H1 (cell line): ENCODE measurements at regions of chr11 and their contacts with region 1.

Region 1: GRCh38 chr11:33065445-33066178 is 26.2 kb downstream of the TCP11L1 start:
- DNase-seq: peak; percentile 73 to 84
- H3K4me3 ChIP-seq: no peak overlapping the region
- H3K27ac ChIP-seq: no peak overlapping the region
- H3K4me1 ChIP-seq: peaks cover 0 to 3% (median 0%) of the 10 kb centered on the region in 4 experiments; a peak in 1 of 7 replicates
- H3K27me3 ChIP-seq: no peaks in the 10 kb centered on the region
- CTCF ChIP-seq: peak; percentile 93 to 99 (median 97)
- EP300 ChIP-seq: no peak
- POLR2A ChIP-seq: no peak
- RAD21 ChIP-seq: peak; percentile 92 to 96

Region 2: GRCh38 chr11:32751381-32751780 is 314.2 kb before region 1 on chr11:
- CTCF ChIA-PET with region 1: interaction called, 28 read pairs
- POLR2A ChIA-PET with region 1: no interaction called
- DNase-seq: no peak
- H3K4me3 ChIP-seq: no peak overlapping the region
- H3K27ac ChIP-seq: no peak overlapping the region
- H3K4me1 ChIP-seq: no peaks in the 10 kb centered on the region
- H3K27me3 ChIP-seq: no peaks in the 10 kb centered on the region
- CTCF ChIP-seq: peak; percentile 28 to 52 (median 44)
- EP300 ChIP-seq: no peak
- POLR2A ChIP-seq: no peak
- RAD21 ChIP-seq: peak; percentile 9 to 27; a peak in 2 of 4 replicates

Region 3: GRCh38 chr11:32960553-32961164 is 105.0 kb before region 1 on chr11:
- CTCF ChIA-PET with region 1: interaction called, 15 read pairs
- POLR2A ChIA-PET with region 1: no interaction called
- DNase-seq: no peak
- H3K4me3 ChIP-seq: no peak overlapping the region
- H3K27ac ChIP-seq: no peak overlapping the region
- H3K4me1 ChIP-seq: no peaks in the 10 kb centered on the region
- H3K27me3 ChIP-seq: no peaks in the 10 kb centered on the region
- CTCF ChIP-seq: peak in 2 of 3 experiments; percentile 33 to 56; a peak in 2 of 4 replicates
- EP300 ChIP-seq: no peak
- POLR2A ChIP-seq: no peak
- RAD21 ChIP-seq: peak; percentile 49 to 65

Region 4: DNA sequence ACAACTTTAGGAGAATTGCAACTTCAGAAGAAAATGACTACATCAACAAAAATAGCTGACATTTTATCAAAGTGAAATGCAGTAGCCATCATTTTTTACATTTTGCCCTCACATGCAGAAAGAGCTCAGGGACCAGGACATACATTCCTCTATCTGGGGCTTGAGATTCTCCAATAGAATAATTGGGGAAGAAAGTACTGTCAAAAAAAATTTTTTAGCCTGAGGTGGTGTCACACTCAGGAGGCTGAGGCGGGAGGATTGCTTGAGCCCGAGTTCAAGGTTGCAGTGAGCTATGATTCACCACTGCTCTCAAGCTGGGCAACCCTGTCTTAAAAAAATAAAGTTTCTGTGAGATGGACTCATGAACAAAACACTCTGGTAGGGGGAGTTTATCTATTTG is 82.1 kb before region 1 on chr11:
- CTCF ChIA-PET with region 1: interaction called, 10 read pairs
- POLR2A ChIA-PET with region 1: interaction called, 4 read pairs
- DNase-seq: no peak
- H3K4me3 ChIP-seq: no peak overlapping the region
- H3K27ac ChIP-seq: no peak overlapping the region
- H3K4me1 ChIP-seq: peaks cover 0 to 2% (median 0%) of the 10 kb centered on the region in 4 experiments; a peak in 1 of 7 replicates
- H3K27me3 ChIP-seq: no peaks in the 10 kb centered on the region
- CTCF ChIP-seq: no peak
- EP300 ChIP-seq: no peak
- POLR2A ChIP-seq: no peak
- RAD21 ChIP-seq: no peak

Region 5: GRCh38 chr11:33015621-33016551 is 49.7 kb before region 1 on chr11 and contains the start of gene DEPDC7:
- CTCF ChIA-PET with region 1: interaction called, 13 read pairs
- POLR2A ChIA-PET with region 1: interaction called, 5 read pairs
- DNase-seq: peak; percentile 76 to 96
- H3K4me3 ChIP-seq: peak within 1 kb of the TSS; percentile 49 to 70 (median 66)
- H3K27ac ChIP-seq: no peak within 1 kb of the TSS
- H3K4me1 ChIP-seq: peaks cover 3 to 6% (median 3%) of the 10 kb centered on the region in 4 experiments; a peak in 6 of 7 replicates
- H3K27me3 ChIP-seq: peaks cover 0 to 12% (median 5%) of the 10 kb centered on the region in 4 experiments; a peak in 4 of 7 replicates
- CTCF ChIP-seq: no peak
- EP300 ChIP-seq: no peak
- POLR2A ChIP-seq: peak; percentile 48 to 64
- RAD21 ChIP-seq: no peak
- total RNA-seq, gene DEPDC7: 6.3 and 7.6 TPM in 2 replicates

Region 6: GRCh38 chr11:33027846-33028536 is 37.6 kb before region 1 on chr11:
- CTCF ChIA-PET with region 1: interaction called, 13 read pairs
- POLR2A ChIA-PET with region 1: interaction called, 3 read pairs
- DNase-seq: no peak
- H3K4me3 ChIP-seq: no peak overlapping the region
- H3K27ac ChIP-seq: no peak overlapping the region
- H3K4me1 ChIP-seq: no peaks in the 10 kb centered on the region
- H3K27me3 ChIP-seq: no peaks in the 10 kb centered on the region
- CTCF ChIP-seq: no peak
- EP300 ChIP-seq: no peak
- POLR2A ChIP-seq: no peak
- RAD21 ChIP-seq: no peak

Region 7: DNA sequence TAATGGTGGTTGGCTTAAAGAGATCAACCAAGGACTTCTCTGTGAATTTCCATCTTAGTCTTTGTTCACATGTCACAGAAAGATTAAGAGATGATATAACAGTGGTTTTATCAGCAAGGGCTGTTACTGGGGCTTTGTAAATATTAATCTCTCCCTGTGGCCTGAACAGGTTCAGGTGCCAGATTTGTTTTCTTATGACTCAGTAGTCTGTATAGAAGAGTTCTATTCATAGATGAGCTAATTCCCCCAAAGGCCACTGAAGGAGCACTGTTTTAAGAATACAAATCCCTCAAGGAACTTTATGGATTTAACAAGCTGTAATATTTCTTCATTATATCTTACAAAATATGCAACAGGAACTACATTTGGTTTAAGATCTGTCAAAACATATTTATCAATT is 24.2 kb after region 1 on chr11:
- CTCF ChIA-PET with region 1: interaction called, 14 read pairs
- POLR2A ChIA-PET with region 1: no interaction called
- DNase-seq: no peak
- H3K4me3 ChIP-seq: no peak overlapping the region
- H3K27ac ChIP-seq: no peak overlapping the region
- H3K4me1 ChIP-seq: no peaks in the 10 kb centered on the region
- H3K27me3 ChIP-seq: no peaks in the 10 kb centered on the region
- CTCF ChIP-seq: peak in 1 of 3 experiments; percentile 18; a peak in 1 of 4 replicates
- EP300 ChIP-seq: no peak
- POLR2A ChIP-seq: no peak
- RAD21 ChIP-seq: no peak